Cardiac septum (tissue), 1 donor: ENCODE measurements at regions of chr7 and their contacts with region 1.

Region 1: GRCh38 chr7:96075510-96076349 is 246.2 kb downstream of the SLC25A13 start:
- DNase-seq: no peak

Region 2: GRCh38 chr7:95916573-95917297 is 159.0 kb before region 1 on chr7:
- intact Hi-C with region 1: loop called (anchors 5 kb)
- DNase-seq: peak; percentile 84

Region 3: DNA sequence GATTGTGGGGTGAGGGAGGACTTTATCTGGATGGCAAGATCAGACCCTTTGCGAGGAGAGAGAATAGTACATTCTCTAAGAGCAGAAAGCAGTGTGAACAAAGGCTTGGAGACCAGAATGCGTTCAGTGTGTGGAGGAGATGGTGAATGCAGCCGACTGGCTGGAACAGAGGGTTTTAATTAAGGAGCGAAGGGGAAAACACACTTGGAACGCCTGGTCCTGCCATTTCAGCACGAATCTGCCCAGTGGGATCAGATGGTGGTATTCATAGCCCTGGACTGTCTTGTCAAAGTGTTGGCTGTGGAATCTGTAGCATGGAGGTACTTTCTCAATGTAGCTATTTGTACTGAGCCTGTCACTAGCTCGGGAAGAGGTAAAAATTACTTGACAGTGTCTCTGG is 14.7 kb before region 1 on chr7:
- intact Hi-C with region 1: no loop called
- DNase-seq: no peak

Region 4: DNA sequence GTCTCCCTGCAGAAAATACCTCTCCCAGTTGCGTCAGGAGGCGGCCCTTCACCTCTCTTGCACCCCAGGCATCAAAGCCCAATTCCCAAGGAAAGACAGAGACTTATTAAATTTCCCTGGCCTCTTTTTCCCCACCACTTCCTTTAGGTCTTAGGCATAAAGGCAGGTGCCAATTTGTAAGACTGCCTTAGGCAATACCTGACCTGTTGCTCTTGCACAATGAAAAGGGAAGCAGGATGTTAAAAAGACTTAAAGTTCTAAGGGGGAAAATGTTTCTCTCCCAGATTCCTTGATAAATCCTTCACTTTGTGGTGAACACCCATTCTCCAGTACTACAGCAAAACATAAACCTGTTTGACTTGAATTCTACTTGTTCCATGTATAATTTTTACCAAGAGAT is 59.5 kb after region 1 on chr7:
- intact Hi-C with region 1: no loop called
- DNase-seq: no peak

Region 5: DNA sequence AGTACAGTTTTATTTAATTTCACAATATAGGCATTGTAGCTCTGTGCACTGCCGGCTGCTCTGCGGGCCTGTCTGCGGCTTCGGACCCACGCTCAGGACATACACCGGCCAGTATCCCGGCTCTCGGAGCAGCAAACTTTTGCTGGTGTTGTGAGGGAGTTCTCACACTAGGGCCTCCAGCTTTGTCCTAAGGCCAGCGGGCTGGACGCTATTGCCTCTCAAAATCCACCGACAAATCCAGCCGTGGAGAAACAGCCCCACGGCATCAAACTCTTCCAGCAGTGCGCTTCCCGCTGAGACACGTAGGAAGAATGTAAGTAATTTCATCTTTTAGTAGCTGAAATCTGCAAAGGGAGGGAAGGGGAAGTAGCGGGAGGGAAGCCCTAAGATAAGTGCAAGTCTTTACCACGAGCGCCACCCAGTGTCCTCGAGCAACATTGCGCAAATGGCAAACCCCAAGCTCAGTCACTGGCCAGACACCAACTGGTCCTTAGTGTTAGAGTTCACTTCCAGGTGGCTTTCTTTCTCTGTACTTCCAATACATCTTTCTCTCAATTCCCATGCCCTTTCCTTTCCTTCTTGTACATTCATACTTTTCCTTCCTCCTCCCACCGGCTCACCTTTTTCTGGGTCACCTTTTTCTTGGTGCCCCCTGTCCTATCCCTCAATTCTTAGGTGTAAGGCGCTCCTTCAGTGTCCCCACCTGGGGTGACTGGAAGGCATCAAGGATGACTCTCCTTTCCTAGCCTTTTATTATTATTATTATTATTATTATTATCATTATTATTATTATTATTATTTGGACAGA is 951.9 kb after region 1 on chr7:
- intact Hi-C with region 1: loop called (anchors 2 kb)
- DNase-seq: no peak